Activated CD8-positive, alpha-beta memory T cell treated with anti-CD3 and anti-CD28 coated beads, Interleukin-2, amount 10 ng/mL, durations not matched to agents 7 days and 5 days (primary cell): ENCODE measurements at regions of chr2 and their contacts with region 1.

Region 1: GRCh38 chr2:231557571-231558237 is 27.5 kb upstream of the NMUR1 start:
- DNase-seq: peak; percentile 85
- ATAC-seq: peak; percentile 96
- H3K4me3 Mint-ChIP-seq: peak overlapping the region; percentile 51
- H3K27ac Mint-ChIP-seq: peak overlapping the region; percentile 78
- H3K4me1 Mint-ChIP-seq: peaks cover 45% of the 10 kb centered on the region
- H3K27me3 Mint-ChIP-seq: peaks cover 3% of the 10 kb centered on the region

Region 2: DNA sequence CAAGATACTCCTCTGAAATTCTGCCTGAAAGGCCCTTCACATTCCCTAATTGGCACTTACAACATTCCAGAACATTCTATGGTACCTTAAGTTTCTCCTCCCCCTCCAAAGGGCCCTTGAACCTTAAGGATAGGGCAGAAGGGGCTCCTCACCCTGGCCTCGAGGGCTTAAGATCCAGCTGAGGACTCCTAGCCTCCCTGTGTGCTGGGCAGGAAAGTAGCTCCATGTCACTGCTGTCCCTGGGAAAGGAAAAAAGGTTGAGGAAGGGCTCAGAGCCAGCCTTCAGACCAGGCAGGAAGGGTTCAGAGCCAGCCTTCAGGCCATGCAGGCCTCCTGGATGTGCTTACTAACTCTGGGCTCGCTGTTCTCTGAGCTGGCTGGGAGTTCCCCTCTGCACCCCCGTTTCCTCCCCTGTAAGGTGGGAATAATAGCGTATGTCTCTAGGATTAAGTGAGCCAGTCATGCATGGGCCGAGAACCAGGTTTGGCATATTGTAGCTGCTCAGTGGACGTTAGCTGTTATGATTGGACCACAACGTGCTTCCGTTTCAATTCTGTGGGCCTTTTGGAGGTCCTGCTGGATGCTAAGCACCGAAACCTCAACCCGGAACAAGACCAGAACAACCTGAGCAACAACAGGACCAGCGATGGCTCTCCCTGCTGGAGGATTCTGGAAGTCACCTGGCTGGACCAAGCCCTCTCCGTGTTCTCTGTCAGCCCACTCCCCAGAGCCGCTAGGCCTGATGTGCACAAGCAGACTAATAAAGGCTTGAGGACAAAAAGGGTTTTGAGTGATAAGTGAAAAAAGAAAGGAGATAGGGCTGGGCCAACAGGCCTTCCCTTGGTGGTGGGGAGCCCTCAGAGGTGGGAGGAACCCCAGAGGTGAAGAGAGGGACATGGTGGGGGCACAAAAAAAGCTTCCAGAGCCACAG is 163.2 kb before region 1 on chr2:
- CTCF ChIA-PET with region 1: no interaction called
- DNase-seq: no peak
- ATAC-seq: no peak
- H3K4me3 Mint-ChIP-seq: peak overlapping the region; percentile 76
- H3K27ac Mint-ChIP-seq: peak overlapping the region; percentile 97
- H3K4me1 Mint-ChIP-seq: peaks cover 33% of the 10 kb centered on the region
- H3K27me3 Mint-ChIP-seq: peaks cover 21% of the 10 kb centered on the region

Region 3: DNA sequence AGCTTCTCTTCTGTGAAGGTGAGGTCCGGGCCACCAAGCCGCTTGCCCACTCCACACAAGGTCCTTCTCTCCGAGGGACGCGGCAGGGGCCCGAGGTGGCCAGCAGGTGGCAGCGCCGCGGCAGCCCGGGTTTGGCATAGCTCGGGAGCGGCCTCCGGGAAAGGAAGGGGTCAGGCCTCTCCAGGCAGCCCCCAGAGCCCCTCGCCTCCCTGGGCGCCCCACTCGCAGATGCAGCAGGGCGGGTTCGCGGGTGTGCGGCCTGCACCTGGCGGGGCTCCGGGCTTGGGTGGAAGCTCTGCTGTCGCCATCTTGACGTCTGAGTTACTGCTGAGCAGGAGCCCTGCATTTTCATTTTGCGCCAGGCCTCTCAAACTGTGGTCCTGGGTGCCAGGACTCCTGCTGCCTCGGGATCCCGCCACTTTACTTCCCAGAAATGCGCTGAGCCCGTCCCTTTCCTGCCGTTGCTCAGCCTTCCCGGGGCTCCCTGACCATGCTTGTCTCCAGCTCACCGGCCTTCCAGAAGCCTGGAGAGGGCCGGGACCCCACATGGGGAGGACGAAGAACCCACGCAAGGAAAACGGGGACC is 74.8 kb before region 1 on chr2:
- CTCF ChIA-PET with region 1: interaction called, 18 read pairs
- DNase-seq: peak; percentile 84
- ATAC-seq: peak; percentile 88
- H3K4me3 Mint-ChIP-seq: peak overlapping the region; percentile 74
- H3K27ac Mint-ChIP-seq: peak overlapping the region; percentile 85
- H3K4me1 Mint-ChIP-seq: peaks cover 13% of the 10 kb centered on the region
- H3K27me3 Mint-ChIP-seq: no peaks in the 10 kb centered on the region

Region 4: GRCh38 chr2:231514103-231514950 is 43.4 kb before region 1 on chr2:
- CTCF ChIA-PET with region 1: interaction called, 95 read pairs
- DNase-seq: peak; percentile 99
- ATAC-seq: peak; percentile 99
- H3K4me3 Mint-ChIP-seq: peak overlapping the region; percentile 83
- H3K27ac Mint-ChIP-seq: peak overlapping the region; percentile 94
- H3K4me1 Mint-ChIP-seq: peaks cover 28% of the 10 kb centered on the region
- H3K27me3 Mint-ChIP-seq: peaks cover 12% of the 10 kb centered on the region

Region 5: DNA sequence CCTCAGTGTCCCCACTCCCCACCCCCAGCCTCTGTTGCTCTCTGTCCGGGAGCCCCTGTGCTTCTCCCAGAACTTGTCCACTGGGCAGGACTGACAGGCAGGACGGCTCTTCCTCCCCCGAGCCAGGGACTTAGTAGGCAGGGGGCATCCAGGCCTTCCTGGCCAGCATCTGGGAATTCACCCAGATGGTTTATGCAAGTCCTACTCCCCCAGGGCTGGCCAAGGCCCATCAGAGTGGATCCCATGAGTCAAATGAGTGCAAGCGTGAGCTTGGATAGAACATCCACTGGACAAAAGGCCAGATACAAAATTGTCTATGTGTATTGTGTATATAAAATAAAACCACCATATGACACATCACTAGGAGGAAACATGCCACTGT is 34.9 kb before region 1 on chr2:
- CTCF ChIA-PET with region 1: interaction called, 95 read pairs
- DNase-seq: no peak
- ATAC-seq: no peak
- H3K4me3 Mint-ChIP-seq: no peak overlapping the region
- H3K27ac Mint-ChIP-seq: no peak overlapping the region
- H3K4me1 Mint-ChIP-seq: peaks cover 62% of the 10 kb centered on the region
- H3K27me3 Mint-ChIP-seq: peaks cover 19% of the 10 kb centered on the region

Region 6: GRCh38 chr2:231530091-231531011 is 27.4 kb before region 1 on chr2 and contains the start of gene NMUR1:
- CTCF ChIA-PET with region 1: interaction called, 128 read pairs
- DNase-seq: peak; percentile 82
- ATAC-seq: peak; percentile 94
- H3K4me3 Mint-ChIP-seq: peak within 1 kb of the TSS; percentile 70
- H3K27ac Mint-ChIP-seq: peak within 1 kb of the TSS; percentile 60
- H3K4me1 Mint-ChIP-seq: peaks cover 51% of the 10 kb centered on the region
- H3K27me3 Mint-ChIP-seq: peaks cover 40% of the 10 kb centered on the region
- total RNA-seq, gene NMUR1: 3.6 to 8.6 TPM

Region 7: GRCh38 chr2:231545105-231545902 is 12.4 kb before region 1 on chr2:
- CTCF ChIA-PET with region 1: interaction called, 30 read pairs
- DNase-seq: peak; percentile 97
- ATAC-seq: peak; percentile 94
- H3K4me3 Mint-ChIP-seq: peak overlapping the region; percentile 67
- H3K27ac Mint-ChIP-seq: peak overlapping the region; percentile 99
- H3K4me1 Mint-ChIP-seq: peaks cover 60% of the 10 kb centered on the region
- H3K27me3 Mint-ChIP-seq: no peaks in the 10 kb centered on the region

Region 8: DNA sequence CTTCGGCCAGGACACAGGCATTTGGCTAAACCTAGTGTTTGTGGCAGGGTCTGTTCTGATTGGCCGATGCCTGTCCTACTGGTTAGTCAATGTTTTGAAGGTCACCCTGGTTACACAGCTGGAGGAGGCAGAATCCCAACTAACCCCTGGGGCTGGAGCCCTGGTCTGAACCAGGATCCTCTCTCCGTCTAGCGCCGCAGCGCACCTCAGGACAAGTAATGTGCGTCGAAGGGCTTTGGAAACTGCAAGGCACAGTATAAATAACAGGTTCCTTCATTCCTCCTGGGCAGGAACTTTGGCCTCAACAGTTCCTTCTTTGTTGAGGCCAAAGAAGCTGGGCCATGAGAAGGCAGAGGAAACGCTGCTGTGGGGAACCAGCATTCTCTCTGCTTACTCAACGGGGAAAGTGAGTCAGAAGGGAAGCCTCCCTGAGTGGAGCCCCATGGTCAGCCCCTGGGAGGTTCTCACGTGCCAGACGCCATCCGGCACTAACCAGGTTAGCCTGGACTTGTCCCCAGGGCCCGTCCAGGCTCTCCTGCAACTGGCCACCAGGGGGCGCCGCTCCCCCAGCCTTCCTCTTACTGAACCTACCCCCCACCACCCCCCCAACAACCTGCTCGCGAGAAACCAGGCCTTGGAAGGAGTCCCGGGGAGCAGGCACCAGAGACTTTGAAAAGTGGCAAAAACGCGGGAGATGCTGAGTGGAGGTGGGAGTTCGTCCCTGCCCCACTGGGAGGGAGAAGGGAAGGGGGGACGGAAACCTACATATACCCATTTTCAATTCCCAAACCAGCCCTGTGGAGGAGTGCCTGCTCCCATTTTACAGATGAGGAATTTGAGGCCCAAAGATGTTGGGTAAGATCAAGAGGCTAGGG is 54.7 kb after region 1 on chr2:
- CTCF ChIA-PET with region 1: no interaction called
- DNase-seq: peak; percentile 97
- ATAC-seq: peak; percentile 73
- H3K4me3 Mint-ChIP-seq: peak overlapping the region; percentile 50
- H3K27ac Mint-ChIP-seq: peak overlapping the region; percentile 96
- H3K4me1 Mint-ChIP-seq: peaks cover 32% of the 10 kb centered on the region
- H3K27me3 Mint-ChIP-seq: no peaks in the 10 kb centered on the region

Region 9: GRCh38 chr2:231720987-231721966 is 163.6 kb after region 1 on chr2:
- CTCF ChIA-PET with region 1: no interaction called
- DNase-seq: no peak
- ATAC-seq: no peak
- H3K4me3 Mint-ChIP-seq: no peak overlapping the region
- H3K27ac Mint-ChIP-seq: no peak overlapping the region
- H3K4me1 Mint-ChIP-seq: peaks cover 7% of the 10 kb centered on the region
- H3K27me3 Mint-ChIP-seq: no peaks in the 10 kb centered on the region